ENCODE measurements at regions of chr4 and their contacts with region 1.

Region 1: DNA sequence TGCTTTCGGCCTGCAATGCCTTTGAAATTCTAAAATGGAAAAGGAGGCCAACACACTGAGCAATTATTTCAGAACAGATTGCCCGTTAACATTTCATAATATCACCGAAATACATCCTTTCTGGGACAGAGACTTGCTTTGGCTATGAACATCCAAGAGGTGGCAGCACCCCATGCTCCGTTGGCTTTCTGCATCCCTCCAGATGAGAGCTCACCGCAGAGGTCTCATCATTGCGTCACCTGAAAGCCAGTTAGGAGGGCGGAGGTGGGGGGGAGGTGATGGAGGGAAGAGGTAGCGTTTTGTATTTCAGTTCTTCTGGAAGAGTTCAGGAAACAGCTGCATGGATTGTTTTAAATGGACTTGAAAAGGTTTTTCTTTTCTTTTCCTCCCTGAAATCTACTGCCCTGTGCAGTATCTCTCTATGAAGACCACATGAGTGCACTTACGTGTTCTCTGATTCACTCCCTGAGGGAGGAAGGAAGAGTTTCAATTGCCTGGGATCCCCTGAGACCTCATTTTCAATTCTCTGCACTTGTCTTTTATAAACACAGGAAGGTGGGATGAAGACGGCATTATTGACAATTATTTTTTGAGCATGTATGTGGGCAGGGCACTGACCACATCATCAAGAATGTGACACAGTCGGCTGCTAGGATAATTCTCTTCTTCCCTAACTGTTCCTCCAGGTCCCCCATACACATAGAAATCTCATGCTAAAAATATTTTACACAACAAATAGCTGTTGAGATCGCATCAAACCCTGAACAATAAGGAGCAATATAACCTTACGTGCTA is 166.9 kb upstream of the PGRMC2 start:
- DNase-seq: peak; percentile 78
- CTCF ChIP-seq: peak; percentile 76

Region 2: GRCh38 chr4:128275346-128275745 is 179.1 kb before region 1 on chr4:
- CTCF ChIA-PET with region 1: no interaction called
- POLR2A ChIA-PET with region 1: no interaction called
- DNase-seq: no peak
- CTCF ChIP-seq: no peak

Region 3: GRCh38 chr4:128468123-128468989 is 13.9 kb after region 1 on chr4:
- CTCF ChIA-PET with region 1: interaction called, 33 read pairs
- POLR2A ChIA-PET with region 1: no interaction called
- DNase-seq: no peak
- CTCF ChIP-seq: no peak